ENCODE measurements at regions of chr3 and their contacts with region 1.

Region 1: DNA sequence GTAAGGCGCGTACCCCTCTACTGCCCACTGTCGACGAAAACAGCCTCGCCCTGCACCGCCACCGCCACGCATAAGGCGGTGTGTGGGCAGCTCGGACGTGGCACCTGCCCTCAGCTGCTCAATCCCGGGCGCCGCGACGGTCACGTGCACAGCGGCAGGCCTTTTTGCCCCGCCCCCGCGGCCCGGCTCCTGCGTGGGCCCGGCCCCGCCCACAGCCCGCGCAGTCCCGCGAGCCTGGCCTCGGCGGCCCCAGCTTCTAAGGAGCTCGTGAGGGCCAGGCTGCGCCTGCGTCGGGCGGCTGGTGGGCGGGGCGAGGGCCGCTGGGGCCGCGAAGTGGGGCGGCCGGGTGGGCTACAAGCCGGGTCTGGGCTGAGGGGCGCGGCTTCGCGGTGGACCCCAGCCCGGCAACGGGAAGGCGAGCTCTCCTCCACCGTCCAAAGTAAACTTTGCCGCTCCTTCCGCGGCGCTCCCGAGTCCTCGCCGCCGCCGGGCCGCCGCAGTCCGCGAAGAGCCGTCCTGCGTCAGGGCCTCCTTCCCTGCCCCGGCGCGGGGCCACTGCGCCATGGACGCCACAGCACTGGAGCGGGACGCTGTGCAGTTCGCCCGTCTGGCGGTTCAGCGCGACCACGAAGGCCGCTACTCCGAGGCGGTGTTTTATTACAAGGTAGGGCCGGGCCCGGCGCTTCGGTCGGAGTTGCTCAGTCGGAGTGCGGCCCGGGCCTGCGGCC is at the start of gene CAPN7:
- DNase-seq: peak; percentile 95
- ATAC-seq: peak; percentile 93
- H3K4me3 Mint-ChIP-seq: peak within 1 kb of the TSS; percentile 81
- H3K27ac Mint-ChIP-seq: peak within 1 kb of the TSS; percentile 85
- H3K4me1 Mint-ChIP-seq: peaks cover 26% of the 10 kb centered on the region
- H3K27me3 Mint-ChIP-seq: no peaks in the 10 kb centered on the region
- total RNA-seq, gene CAPN7: 28.1 to 28.4 TPM

Region 2: GRCh38 chr3:15098503-15099363 is 107.4 kb before region 1 on chr3 and contains the start of gene RBSN:
- CTCF ChIA-PET with region 1: interaction called, 12 read pairs
- DNase-seq: peak; percentile 98
- ATAC-seq: peak; percentile 87
- H3K4me3 Mint-ChIP-seq: peak within 1 kb of the TSS; percentile 94
- H3K27ac Mint-ChIP-seq: peak within 1 kb of the TSS; percentile 92
- H3K4me1 Mint-ChIP-seq: peaks cover 36% of the 10 kb centered on the region
- H3K27me3 Mint-ChIP-seq: peaks cover 3% of the 10 kb centered on the region
- total RNA-seq, gene RBSN: 15.7 to 21.8 TPM

Region 3: DNA sequence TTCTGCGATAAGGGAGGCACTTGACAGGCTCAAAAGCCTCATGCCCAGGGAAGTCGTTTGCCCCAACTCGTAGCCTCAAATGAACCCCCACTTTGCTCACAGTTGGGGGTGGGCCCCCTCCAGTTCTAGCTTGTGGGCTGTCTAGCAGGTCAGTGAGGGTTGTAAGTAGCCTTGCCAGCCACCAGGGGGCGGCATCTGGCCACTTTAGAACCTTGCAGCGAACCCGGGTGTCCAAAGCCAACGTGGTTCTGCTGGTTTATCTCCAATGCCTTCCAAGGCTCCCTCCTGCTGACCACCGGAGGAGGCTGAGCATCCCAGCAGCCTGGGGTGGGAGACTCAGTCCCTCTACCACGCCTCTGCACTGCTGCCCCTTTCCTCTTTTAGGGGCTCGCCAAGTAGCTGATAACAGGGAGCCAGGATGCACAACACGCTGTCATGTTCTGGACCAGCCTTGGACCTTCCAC is 98.0 kb before region 1 on chr3:
- CTCF ChIA-PET with region 1: interaction called, 51 read pairs
- DNase-seq: peak; percentile 81
- ATAC-seq: peak; percentile 95
- H3K4me3 Mint-ChIP-seq: no peak overlapping the region
- H3K27ac Mint-ChIP-seq: no peak overlapping the region
- H3K4me1 Mint-ChIP-seq: peaks cover 3% of the 10 kb centered on the region
- H3K27me3 Mint-ChIP-seq: peaks cover 16% of the 10 kb centered on the region

Region 4: GRCh38 chr3:15377961-15378791 is 172.1 kb after region 1 on chr3:
- CTCF ChIA-PET with region 1: interaction called, 15 read pairs
- DNase-seq: peak; percentile 98
- ATAC-seq: peak; percentile 95
- H3K4me3 Mint-ChIP-seq: no peak overlapping the region
- H3K27ac Mint-ChIP-seq: peak overlapping the region; percentile 82
- H3K4me1 Mint-ChIP-seq: peaks cover 6% of the 10 kb centered on the region
- H3K27me3 Mint-ChIP-seq: no peaks in the 10 kb centered on the region

Region 5: DNA sequence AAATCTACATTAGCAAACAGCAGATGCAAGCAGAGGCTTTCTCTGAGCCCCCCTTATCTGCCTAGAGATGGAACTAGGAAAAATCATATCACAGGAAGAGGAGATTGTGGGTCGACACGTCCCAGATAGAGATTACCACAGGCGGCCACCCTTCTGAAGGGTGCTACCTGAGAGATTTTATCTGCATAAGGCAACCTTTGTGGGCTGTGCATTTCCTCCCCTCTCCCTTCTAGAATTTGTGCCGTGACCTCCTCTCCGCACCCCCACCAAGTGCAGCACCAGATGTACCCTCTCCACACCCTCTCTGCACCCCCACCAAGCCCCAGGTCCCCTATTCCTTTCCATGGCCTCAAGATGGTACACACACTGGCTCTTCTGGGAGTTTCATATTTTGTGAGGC is 193.9 kb after region 1 on chr3:
- CTCF ChIA-PET with region 1: interaction called, 45 read pairs
- DNase-seq: peak; percentile 43
- ATAC-seq: peak; percentile 80
- H3K4me3 Mint-ChIP-seq: no peak overlapping the region
- H3K27ac Mint-ChIP-seq: no peak overlapping the region
- H3K4me1 Mint-ChIP-seq: peaks cover 36% of the 10 kb centered on the region
- H3K27me3 Mint-ChIP-seq: peaks cover 5% of the 10 kb centered on the region

Region 6: GRCh38 chr3:15405448-15406050 is 199.5 kb after region 1 on chr3:
- CTCF ChIA-PET with region 1: interaction called, 45 read pairs
- DNase-seq: no peak
- ATAC-seq: peak; percentile 64
- H3K4me3 Mint-ChIP-seq: no peak overlapping the region
- H3K27ac Mint-ChIP-seq: no peak overlapping the region
- H3K4me1 Mint-ChIP-seq: peaks cover 12% of the 10 kb centered on the region
- H3K27me3 Mint-ChIP-seq: no peaks in the 10 kb centered on the region